Ovary (tissue), 10 donors: ENCODE measurements at regions of chr14 and their contacts with region 1.

Region 1: GRCh38 chr14:101761032-101761880 is at the start of gene PPP2R5C:
- DNase-seq: peak; percentile 91 to 94 (median 93)
- H3K4me3 ChIP-seq: peak within 1 kb of the TSS; percentile 91
- H3K27ac ChIP-seq: peak within 1 kb of the TSS; percentile 80 to 96
- H3K4me1 ChIP-seq: no peaks in the 10 kb centered on the region
- H3K27me3 ChIP-seq: no peaks in the 10 kb centered on the region
- CTCF ChIP-seq: no peak
- EP300 ChIP-seq: no peak
- POLR2A ChIP-seq: peak; percentile 34
- total RNA-seq, gene PPP2R5C: 63.1 to 136 (median 111) TPM

Region 2: GRCh38 chr14:101364503-101365328 is 396.5 kb before region 1 on chr14:
- intact Hi-C with region 1: no loop called
- DNase-seq: peak; percentile 87 to 97 (median 94)
- H3K4me3 ChIP-seq: no peak overlapping the region
- H3K27ac ChIP-seq: peak overlapping the region; percentile 67 to 94
- H3K4me1 ChIP-seq: peaks cover 47% of the 10 kb centered on the region
- H3K27me3 ChIP-seq: no peaks in the 10 kb centered on the region
- CTCF ChIP-seq: peak in 1 of 3 donors; percentile 7
- EP300 ChIP-seq: peak; percentile 87
- POLR2A ChIP-seq: peak; percentile 52

Region 3: GRCh38 chr14:101843665-101844064 is 82.4 kb after region 1 on chr14:
- intact Hi-C with region 1: loop called in 1 of 4 experiments (anchors 10 kb)
- DNase-seq: no peak
- H3K4me3 ChIP-seq: no peak overlapping the region
- H3K27ac ChIP-seq: no peak overlapping the region
- H3K4me1 ChIP-seq: peaks cover 1% of the 10 kb centered on the region
- H3K27me3 ChIP-seq: no peaks in the 10 kb centered on the region
- CTCF ChIP-seq: no peak
- EP300 ChIP-seq: no peak
- POLR2A ChIP-seq: no peak

Region 4: DNA sequence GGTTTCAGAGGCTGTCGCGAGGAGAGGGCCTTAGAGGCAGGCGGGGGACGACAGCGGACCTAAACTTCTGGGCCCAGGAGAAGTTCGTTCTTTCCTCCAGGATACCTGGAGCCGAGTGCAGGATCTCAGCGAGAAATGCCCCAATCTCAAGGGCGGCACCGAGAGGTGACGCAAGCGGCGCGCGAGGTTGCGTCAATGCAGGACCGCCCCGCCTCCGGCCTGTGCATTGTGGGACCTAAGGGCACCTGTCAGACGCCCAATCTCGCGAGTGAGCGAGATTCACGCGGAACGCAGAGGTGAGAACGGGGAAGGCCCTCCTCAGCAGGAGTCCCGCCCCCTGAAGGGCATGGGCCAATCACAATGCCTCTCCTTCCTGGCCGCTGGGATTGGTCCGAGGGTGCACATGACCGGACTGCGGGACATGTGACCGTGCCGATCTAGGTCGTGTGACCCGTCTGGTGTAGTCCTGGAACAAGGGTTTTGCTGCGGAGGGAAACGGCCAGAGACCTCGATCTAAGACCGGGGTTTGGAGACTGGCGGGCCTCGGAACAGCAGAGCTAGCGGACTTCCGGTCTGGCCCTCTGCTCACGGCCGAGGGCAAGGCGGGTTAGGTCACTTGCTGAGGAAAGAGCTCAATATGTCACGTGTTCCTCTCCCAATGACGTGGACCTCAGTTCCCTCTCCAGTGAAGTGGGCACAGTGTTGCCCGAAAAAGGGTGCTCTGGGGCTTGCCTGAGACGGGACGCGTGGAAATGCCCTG is 186.8 kb after region 1 on chr14:
- intact Hi-C with region 1: loop called in 1 of 4 experiments (anchors 2 kb)
- DNase-seq: peak; percentile 100
- H3K4me3 ChIP-seq: peak overlapping the region; percentile 92
- H3K27ac ChIP-seq: peak overlapping the region; percentile 94 to 98
- H3K4me1 ChIP-seq: peaks cover 4% of the 10 kb centered on the region
- H3K27me3 ChIP-seq: no peaks in the 10 kb centered on the region
- CTCF ChIP-seq: no peak
- EP300 ChIP-seq: peak; percentile 96
- POLR2A ChIP-seq: peak; percentile 94